ENCODE measurements at regions of chr2 and their contacts with region 1.

Region 1: GRCh38 chr2:163171786-163172531 is 333.4 kb upstream of the KCNH7 start:
- DNase-seq: no peak
- H3K4me3 ChIP-seq: no peak overlapping the region
- H3K27ac ChIP-seq: no peak overlapping the region
- H3K4me1 ChIP-seq: no peaks in the 10 kb centered on the region
- H3K27me3 ChIP-seq: no peaks in the 10 kb centered on the region

Region 2: DNA sequence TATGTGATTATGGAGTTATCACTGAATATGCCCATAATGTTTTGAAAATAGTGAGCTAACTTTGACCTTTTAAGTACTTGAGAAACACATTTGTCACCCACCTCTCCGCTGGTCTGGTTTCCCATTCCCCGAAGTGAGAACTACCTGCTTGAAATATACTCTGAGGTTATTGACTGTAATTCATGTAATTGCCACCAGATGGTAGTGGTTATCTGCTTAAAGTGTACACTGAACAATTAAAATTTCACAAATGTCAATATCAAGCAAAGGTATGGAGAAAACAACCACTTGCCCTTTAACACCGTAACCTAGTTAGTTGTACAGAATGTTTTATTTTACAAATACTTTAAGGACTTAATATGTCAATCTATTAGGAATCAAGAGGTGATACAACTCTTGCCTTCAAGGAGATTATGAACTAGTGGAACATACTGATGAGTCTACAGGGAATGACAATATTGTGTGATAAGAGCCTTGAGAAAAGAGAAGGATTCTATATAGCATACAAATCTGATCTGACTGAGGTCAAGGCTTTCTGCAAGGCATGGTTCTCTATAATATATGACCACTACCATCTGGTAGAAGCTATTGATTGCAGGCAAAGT is 16.6 kb before region 1 on chr2:
- CTCF ChIA-PET with region 1: interaction called, 27 read pairs
- POLR2A ChIA-PET with region 1: no interaction called
- DNase-seq: peak; percentile 33 to 59 (median 56)
- H3K4me3 ChIP-seq: no peak overlapping the region
- H3K27ac ChIP-seq: no peak overlapping the region
- H3K4me1 ChIP-seq: no peaks in the 10 kb centered on the region
- H3K27me3 ChIP-seq: no peaks in the 10 kb centered on the region

Region 3: DNA sequence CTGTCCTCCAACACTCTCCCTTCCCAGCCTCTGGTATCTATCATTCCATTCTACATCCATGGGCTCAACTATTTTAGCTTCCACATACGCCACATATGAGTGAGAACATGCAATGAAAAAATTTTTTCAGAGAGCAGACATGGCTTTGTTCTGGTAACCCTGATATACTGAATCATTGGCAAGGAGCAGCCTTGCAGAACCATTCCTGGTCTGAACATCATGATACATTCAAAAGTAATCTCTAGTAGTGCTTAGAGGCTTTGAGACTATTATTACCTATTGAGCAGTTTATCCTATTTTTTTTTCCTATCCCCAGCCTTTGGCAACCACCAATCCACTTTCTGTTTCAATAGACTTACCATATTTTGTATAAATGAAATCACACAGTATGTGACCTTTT is 59.7 kb after region 1 on chr2:
- CTCF ChIA-PET with region 1: no interaction called
- POLR2A ChIA-PET with region 1: no interaction called
- DNase-seq: no peak
- H3K4me3 ChIP-seq: no peak overlapping the region
- H3K27ac ChIP-seq: no peak overlapping the region
- H3K4me1 ChIP-seq: no peaks in the 10 kb centered on the region
- H3K27me3 ChIP-seq: no peaks in the 10 kb centered on the region

Measured in common myeloid progenitor, CD34-positive (primary cell).